CD8-positive, alpha-beta T cell (primary cell): ENCODE measurements at regions of chr7 and their contacts with region 1.

Region 1: GRCh38 chr7:92768501-92769393 is 67.6 kb downstream of the CDK6 start:
- DNase-seq: no peak
- ATAC-seq: no peak
- H3K4me3 ChIP-seq: no peak overlapping the region
- H3K4me3 Mint-ChIP-seq: no peak overlapping the region
- H3K27ac ChIP-seq: no peak overlapping the region
- H3K27ac Mint-ChIP-seq: no peak overlapping the region
- H3K4me1 ChIP-seq: no peaks in the 10 kb centered on the region
- H3K4me1 Mint-ChIP-seq: peaks cover 19% of the 10 kb centered on the region
- H3K27me3 ChIP-seq: no peaks in the 10 kb centered on the region
- H3K27me3 Mint-ChIP-seq: no peaks in the 10 kb centered on the region
- CTCF ChIP-seq: no peak

Region 2: GRCh38 chr7:92731335-92732063 is 37.2 kb before region 1 on chr7:
- CTCF ChIA-PET with region 1: no interaction called
- POLR2A ChIA-PET with region 1: no interaction called
- intact Hi-C with region 1: loop called in 1 of 2 experiments (anchors 5 kb)
- DNase-seq: no peak
- ATAC-seq: no peak
- H3K4me3 ChIP-seq: no peak overlapping the region
- H3K4me3 Mint-ChIP-seq: no peak overlapping the region
- H3K27ac ChIP-seq: no peak overlapping the region
- H3K27ac Mint-ChIP-seq: no peak overlapping the region
- H3K4me1 ChIP-seq: no peaks in the 10 kb centered on the region
- H3K4me1 Mint-ChIP-seq: peaks cover 20% of the 10 kb centered on the region
- H3K27me3 ChIP-seq: no peaks in the 10 kb centered on the region
- H3K27me3 Mint-ChIP-seq: no peaks in the 10 kb centered on the region
- CTCF ChIP-seq: no peak